ENCODE measurements at regions of chr9 and their contacts with region 1.

Region 1: DNA sequence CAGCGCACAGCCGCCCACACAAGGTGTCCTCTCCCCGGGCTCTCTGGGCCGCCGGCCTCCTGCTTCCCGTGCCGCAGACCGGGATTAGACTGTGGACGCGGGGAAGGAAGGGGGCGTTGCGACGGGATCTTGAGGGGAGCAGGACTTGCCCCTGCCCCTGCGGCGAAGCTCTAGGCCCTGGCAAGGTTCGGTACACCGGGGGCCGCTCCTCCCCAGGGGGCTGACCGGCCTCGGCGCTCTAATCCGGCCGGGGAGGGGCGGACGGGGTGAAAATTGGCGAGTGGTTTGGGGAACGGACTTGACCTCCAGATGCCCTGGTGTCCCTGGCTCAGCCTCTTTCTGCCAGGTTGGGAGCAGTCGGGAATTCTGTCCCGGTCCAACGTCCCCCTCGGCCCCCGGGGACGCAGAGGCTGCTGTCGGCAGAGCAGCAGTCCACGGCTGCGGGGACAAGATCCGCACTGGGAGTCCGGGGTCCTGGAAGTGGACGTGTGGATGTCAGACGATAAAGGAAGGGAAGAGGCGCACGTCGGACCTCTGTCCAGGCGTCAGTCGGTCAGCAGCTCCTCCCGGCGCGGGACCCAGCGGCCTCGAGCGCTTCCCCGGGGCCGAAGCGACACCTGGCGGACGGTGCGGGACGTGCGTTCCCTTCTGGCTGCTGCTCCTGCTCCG is 1.9 kb upstream of the CNTFR start:
- DNase-seq: peak; percentile 85
- ATAC-seq: peak; percentile 92
- H3K4me3 ChIP-seq: peak overlapping the region; percentile 38 to 73 (median 48)
- H3K4me3 Mint-ChIP-seq: peak overlapping the region; percentile 81
- H3K27ac ChIP-seq: no peak overlapping the region
- H3K27ac Mint-ChIP-seq: no peak overlapping the region
- H3K4me1 ChIP-seq: peaks cover 40 to 49% of the 10 kb centered on the region in 2 donors
- H3K4me1 Mint-ChIP-seq: peaks cover 37% of the 10 kb centered on the region
- H3K27me3 ChIP-seq: peaks cover 0 to 81% (median 60%) of the 10 kb centered on the region in 4 experiments
- H3K27me3 Mint-ChIP-seq: peaks cover 75% of the 10 kb centered on the region
- CTCF ChIP-seq: peak; percentile 95

Region 2: DNA sequence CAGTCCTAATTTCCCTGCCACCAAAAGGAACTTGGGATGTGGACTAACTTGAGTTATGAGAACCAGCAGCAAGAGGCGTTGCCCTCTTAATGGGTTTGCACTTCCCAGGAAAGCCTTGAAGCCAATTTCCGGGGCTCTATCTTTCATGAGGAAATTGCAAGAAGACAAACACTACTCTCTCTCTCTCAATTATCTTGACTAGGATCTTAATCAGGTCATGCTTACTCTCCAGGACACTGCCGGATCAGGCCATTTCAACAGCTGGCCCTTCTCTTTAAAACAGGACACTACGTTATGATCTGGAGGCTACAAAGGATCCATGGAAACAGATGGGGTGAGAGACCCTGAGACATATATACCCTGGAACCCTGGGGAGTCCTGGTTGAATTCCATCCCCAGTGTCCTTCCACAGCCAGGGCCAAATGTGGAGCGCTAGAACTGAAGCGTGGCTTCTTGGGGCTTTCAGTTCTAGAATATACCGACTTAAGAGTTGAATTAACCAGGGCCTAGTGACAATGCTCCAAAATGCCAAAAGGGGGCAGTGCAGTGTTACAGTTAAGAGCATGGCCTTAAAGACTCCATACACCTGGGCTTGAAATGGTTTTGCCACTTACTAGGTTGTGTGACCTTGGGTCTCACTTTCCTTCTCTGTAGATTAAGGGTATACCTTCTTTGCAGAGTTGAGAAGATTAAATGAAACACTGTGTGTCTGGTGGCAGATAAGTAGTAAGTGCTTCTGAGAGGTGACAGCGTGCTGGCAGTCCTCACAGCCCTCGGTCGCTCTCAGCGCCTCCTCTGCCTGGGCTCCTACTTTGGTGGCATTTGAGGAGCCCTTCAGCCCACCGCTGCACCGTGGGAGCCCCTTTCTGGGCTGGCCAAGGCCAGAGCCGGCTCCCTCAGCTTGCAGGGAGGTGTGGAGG is 154.1 kb before region 1 on chr9:
- CTCF ChIA-PET with region 1: interaction called, 17 read pairs
- POLR2A ChIA-PET with region 1: no interaction called
- intact Hi-C with region 1: loop called (anchors 1 kb)
- DNase-seq: peak; percentile 81
- ATAC-seq: peak; percentile 65
- H3K4me3 ChIP-seq: no peak overlapping the region
- H3K4me3 Mint-ChIP-seq: no peak overlapping the region
- H3K27ac ChIP-seq: no peak overlapping the region
- H3K27ac Mint-ChIP-seq: no peak overlapping the region
- H3K4me1 ChIP-seq: no peaks in the 10 kb centered on the region
- H3K4me1 Mint-ChIP-seq: no peaks in the 10 kb centered on the region
- H3K27me3 ChIP-seq: no peaks in the 10 kb centered on the region
- H3K27me3 Mint-ChIP-seq: no peaks in the 10 kb centered on the region
- CTCF ChIP-seq: peak; percentile 82

Region 3: GRCh38 chr9:34547960-34548611 is 43.3 kb before region 1 on chr9:
- CTCF ChIA-PET with region 1: interaction called, 7 read pairs
- POLR2A ChIA-PET with region 1: no interaction called
- intact Hi-C with region 1: loop called (anchors 1 kb)
- DNase-seq: peak; percentile 43
- ATAC-seq: peak; percentile 41
- H3K4me3 ChIP-seq: no peak overlapping the region
- H3K4me3 Mint-ChIP-seq: no peak overlapping the region
- H3K27ac ChIP-seq: no peak overlapping the region
- H3K27ac Mint-ChIP-seq: no peak overlapping the region
- H3K4me1 ChIP-seq: no peaks in the 10 kb centered on the region
- H3K4me1 Mint-ChIP-seq: no peaks in the 10 kb centered on the region
- H3K27me3 ChIP-seq: peaks cover 0 to 17% (median 5%) of the 10 kb centered on the region in 4 experiments
- H3K27me3 Mint-ChIP-seq: peaks cover 32% of the 10 kb centered on the region
- CTCF ChIP-seq: peak; percentile 58

Region 4: GRCh38 chr9:34603610-34604231 is 12.3 kb after region 1 on chr9:
- CTCF ChIA-PET with region 1: interaction called, 27 read pairs
- POLR2A ChIA-PET with region 1: no interaction called
- intact Hi-C with region 1: no loop called
- DNase-seq: peak; percentile 82
- ATAC-seq: peak; percentile 94
- H3K4me3 ChIP-seq: no peak overlapping the region
- H3K4me3 Mint-ChIP-seq: no peak overlapping the region
- H3K27ac ChIP-seq: no peak overlapping the region
- H3K27ac Mint-ChIP-seq: no peak overlapping the region
- H3K4me1 ChIP-seq: no peaks in the 10 kb centered on the region
- H3K4me1 Mint-ChIP-seq: no peaks in the 10 kb centered on the region
- H3K27me3 ChIP-seq: peaks cover 0 to 10% (median 0%) of the 10 kb centered on the region in 4 experiments
- H3K27me3 Mint-ChIP-seq: peaks cover 13% of the 10 kb centered on the region
- CTCF ChIP-seq: peak; percentile 91